ENCODE measurements at regions of chr16 and their contacts with region 1.

Region 1: GRCh38 chr16:31458844-31459721 is at the start of gene ARMC5:
- DNase-seq: peak; percentile 98
- H3K4me3 ChIP-seq: peak within 1 kb of the TSS; percentile 92
- H3K27ac ChIP-seq: peak within 1 kb of the TSS; percentile 80
- H3K4me1 ChIP-seq: peaks cover 35% of the 10 kb centered on the region
- CTCF ChIP-seq: peak; percentile 74
- total RNA-seq, gene ARMC5: 6.4 and 7.0 TPM in 2 replicates

Region 2: GRCh38 chr16:31073968-31074813 is 384.9 kb before region 1 on chr16 and contains the starts of genes ZNF646 and ZNF668:
- CTCF ChIA-PET with region 1: no interaction called
- POLR2A ChIA-PET with region 1: interaction called, 3 read pairs
- intact Hi-C with region 1: loop called (anchors 2 kb)
- DNase-seq: peak; percentile 100
- H3K4me3 ChIP-seq: peak within 1 kb of the TSS; percentile 88
- H3K27ac ChIP-seq: peak within 1 kb of the TSS; percentile 84
- H3K4me1 ChIP-seq: peaks cover 15% of the 10 kb centered on the region
- CTCF ChIP-seq: no peak
- total RNA-seq, gene ZNF646: 25.4 and 30.1 TPM in 2 replicates
- total RNA-seq, gene ZNF668: 7.8 and 18.7 TPM in 2 replicates

Region 3: GRCh38 chr16:31117391-31118197 is 341.5 kb before region 1 on chr16 and contains the start of gene KAT8:
- CTCF ChIA-PET with region 1: no interaction called
- POLR2A ChIA-PET with region 1: no interaction called
- intact Hi-C with region 1: loop called (anchors 10 kb)
- DNase-seq: peak; percentile 99
- H3K4me3 ChIP-seq: peak within 1 kb of the TSS; percentile 81
- H3K27ac ChIP-seq: peak within 1 kb of the TSS; percentile 65
- H3K4me1 ChIP-seq: peaks cover 8% of the 10 kb centered on the region
- CTCF ChIP-seq: no peak
- total RNA-seq, gene KAT8: 86.9 and 89.1 TPM in 2 replicates

Region 4: DNA sequence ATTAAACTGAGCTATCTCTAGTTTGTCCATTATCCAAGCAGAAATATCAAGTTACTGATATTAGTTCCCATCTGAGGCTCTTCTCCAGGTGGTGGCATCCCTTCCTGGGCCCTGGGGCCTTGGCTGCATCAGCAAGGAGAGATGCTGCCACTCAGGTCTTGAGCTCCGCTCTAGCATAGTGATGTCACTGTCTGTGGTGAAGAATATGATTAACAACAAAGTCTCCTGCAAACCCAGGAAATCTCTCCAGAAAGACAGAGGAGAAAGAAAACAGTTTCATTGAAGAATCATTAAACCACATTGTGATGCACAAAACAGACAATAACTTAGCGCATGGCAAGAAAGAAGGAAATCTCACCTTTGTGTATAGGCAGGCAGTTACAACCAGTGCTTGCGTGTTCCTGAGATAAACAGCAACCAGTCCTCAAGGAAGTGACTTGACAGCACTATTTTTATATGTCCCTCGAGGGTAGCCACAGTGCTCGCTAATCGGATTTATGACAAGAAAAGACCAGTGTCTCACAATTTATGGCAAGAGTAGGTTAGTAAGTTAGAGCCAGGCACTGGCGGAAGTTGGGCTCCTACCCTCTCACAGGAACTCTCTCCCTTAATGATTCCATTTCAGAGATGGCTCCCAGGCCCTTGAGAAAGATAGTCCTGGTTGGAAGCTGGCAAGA is 219.7 kb after region 1 on chr16:
- CTCF ChIA-PET with region 1: no interaction called
- POLR2A ChIA-PET with region 1: no interaction called
- intact Hi-C with region 1: no loop called
- DNase-seq: no peak
- H3K4me3 ChIP-seq: no peak overlapping the region
- H3K27ac ChIP-seq: no peak overlapping the region
- H3K4me1 ChIP-seq: no peaks in the 10 kb centered on the region
- CTCF ChIP-seq: no peak

Region 5: GRCh38 chr16:31696968-31697743 is 238.1 kb after region 1 on chr16:
- CTCF ChIA-PET with region 1: no interaction called
- POLR2A ChIA-PET with region 1: no interaction called
- intact Hi-C with region 1: loop called (anchors 5 kb)
- DNase-seq: peak; percentile 27
- H3K4me3 ChIP-seq: no peak overlapping the region
- H3K27ac ChIP-seq: no peak overlapping the region
- H3K4me1 ChIP-seq: peaks cover 23% of the 10 kb centered on the region
- CTCF ChIP-seq: peak; percentile 78

Region 6: GRCh38 chr16:31713071-31713944 is 254.2 kb after region 1 on chr16:
- CTCF ChIA-PET with region 1: no interaction called
- POLR2A ChIA-PET with region 1: interaction called, 3 read pairs
- intact Hi-C with region 1: loop called (anchors 1 kb)
- DNase-seq: peak; percentile 96
- H3K4me3 ChIP-seq: peak overlapping the region; percentile 92
- H3K27ac ChIP-seq: peak overlapping the region; percentile 80
- H3K4me1 ChIP-seq: peaks cover 24% of the 10 kb centered on the region
- CTCF ChIP-seq: no peak

Region 7: DNA sequence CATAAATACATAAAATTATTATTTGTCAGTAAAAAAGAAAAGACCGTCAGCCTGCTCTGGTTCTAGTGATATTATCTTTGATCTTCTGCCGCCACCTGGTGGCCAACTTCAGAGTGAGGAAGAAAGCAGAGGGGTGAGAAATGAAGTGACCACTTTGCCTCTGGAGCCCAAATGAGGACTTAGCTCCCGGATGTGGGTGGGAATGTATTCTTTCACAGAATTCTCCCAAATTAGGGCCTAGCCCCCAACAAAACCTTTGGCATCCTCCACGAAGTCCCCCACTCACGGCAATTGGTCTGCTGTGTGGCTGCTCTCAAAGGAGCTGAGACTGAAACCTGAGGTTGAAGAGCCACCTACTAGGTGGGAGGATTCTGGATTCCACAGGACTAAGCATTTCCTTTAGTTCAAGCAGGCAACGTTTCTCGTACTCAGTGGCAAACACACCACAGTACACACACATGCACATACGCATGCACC is 409.6 kb after region 1 on chr16:
- CTCF ChIA-PET with region 1: interaction called, 10 read pairs
- POLR2A ChIA-PET with region 1: interaction called, 6 read pairs
- intact Hi-C with region 1: no loop called
- DNase-seq: peak; percentile 80
- H3K4me3 ChIP-seq: peak overlapping the region; percentile 17
- H3K27ac ChIP-seq: no peak overlapping the region
- H3K4me1 ChIP-seq: peaks cover 28% of the 10 kb centered on the region
- CTCF ChIP-seq: peak; percentile 90

Region 8: DNA sequence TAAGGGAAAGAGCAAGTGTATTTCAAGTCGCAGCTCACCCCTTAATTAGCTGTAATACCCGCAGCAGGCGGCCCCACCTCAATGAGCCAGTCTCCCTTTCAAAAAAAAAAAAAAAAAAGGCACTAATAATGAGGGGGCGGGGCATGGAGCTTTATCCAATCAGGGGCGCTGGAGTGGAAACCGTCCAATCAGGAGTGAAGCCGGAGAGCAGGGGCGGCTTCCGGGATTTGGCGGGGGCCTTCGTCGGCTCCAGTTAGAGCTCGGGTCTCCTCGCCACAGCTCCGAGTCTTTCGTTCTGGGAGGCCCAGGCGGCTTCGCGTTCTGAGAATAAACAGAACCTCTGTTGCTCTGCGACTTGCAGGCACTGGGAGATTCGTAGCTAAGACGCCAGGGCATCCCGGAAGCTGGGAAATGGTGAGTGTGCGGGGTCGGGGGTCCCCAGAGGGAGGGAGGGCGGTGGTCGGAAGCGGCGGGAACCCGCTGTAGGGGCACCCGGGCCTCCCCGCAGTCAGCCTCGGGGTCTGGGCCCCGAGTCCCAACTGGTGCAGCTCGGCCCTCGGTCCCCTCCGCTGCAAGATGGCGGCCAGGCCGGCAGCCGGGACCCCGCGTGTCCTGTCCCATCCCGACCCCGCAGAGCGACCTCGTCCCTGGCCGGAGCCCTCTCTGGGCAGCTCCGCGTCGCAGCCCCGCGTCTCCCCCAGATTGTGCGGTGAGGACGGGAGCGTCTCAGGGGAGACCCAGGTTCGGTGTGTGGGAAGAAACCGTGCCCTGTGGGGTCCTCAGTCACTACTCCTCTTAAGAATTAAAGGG is 414.7 kb after region 1 on chr16 and contains the start of gene ZNF267:
- CTCF ChIA-PET with region 1: interaction called, 10 read pairs
- POLR2A ChIA-PET with region 1: interaction called, 6 read pairs
- intact Hi-C with region 1: loop called (anchors 2 kb)
- DNase-seq: peak; percentile 97
- H3K4me3 ChIP-seq: peak within 1 kb of the TSS; percentile 95
- H3K27ac ChIP-seq: peak within 1 kb of the TSS; percentile 92
- H3K4me1 ChIP-seq: peaks cover 44% of the 10 kb centered on the region
- CTCF ChIP-seq: no peak
- total RNA-seq, gene ZNF267: 23.3 and 23.5 TPM in 2 replicates